A549 (cell line): ENCODE measurements at regions of chr17 and their contacts with region 1.

Region 1: GRCh38 chr17:2386400-2387085 is 14.3 kb downstream of the MNT start:
- DNase-seq: peak in 1 of 2 experiments; percentile 42
- ATAC-seq: no peak
- H3K4me3 ChIP-seq: no peak overlapping the region
- H3K27ac ChIP-seq: no peak overlapping the region
- H3K4me1 ChIP-seq: peaks cover 11% of the 10 kb centered on the region
- CTCF ChIP-seq: no peak
- EP300 ChIP-seq: no peak
- POLR2A ChIP-seq: no peak
- RAD21 ChIP-seq: no peak

Region 2: GRCh38 chr17:2354311-2354710 is 32.2 kb before region 1 on chr17:
- CTCF ChIA-PET with region 1: interaction called, 255 read pairs
- POLR2A ChIA-PET with region 1: no interaction called
- DNase-seq: no peak
- ATAC-seq: no peak
- H3K4me3 ChIP-seq: no peak overlapping the region
- H3K27ac ChIP-seq: no peak overlapping the region
- H3K4me1 ChIP-seq: peaks cover 15% of the 10 kb centered on the region
- CTCF ChIP-seq: no peak
- EP300 ChIP-seq: no peak
- POLR2A ChIP-seq: no peak
- RAD21 ChIP-seq: no peak

Region 3: DNA sequence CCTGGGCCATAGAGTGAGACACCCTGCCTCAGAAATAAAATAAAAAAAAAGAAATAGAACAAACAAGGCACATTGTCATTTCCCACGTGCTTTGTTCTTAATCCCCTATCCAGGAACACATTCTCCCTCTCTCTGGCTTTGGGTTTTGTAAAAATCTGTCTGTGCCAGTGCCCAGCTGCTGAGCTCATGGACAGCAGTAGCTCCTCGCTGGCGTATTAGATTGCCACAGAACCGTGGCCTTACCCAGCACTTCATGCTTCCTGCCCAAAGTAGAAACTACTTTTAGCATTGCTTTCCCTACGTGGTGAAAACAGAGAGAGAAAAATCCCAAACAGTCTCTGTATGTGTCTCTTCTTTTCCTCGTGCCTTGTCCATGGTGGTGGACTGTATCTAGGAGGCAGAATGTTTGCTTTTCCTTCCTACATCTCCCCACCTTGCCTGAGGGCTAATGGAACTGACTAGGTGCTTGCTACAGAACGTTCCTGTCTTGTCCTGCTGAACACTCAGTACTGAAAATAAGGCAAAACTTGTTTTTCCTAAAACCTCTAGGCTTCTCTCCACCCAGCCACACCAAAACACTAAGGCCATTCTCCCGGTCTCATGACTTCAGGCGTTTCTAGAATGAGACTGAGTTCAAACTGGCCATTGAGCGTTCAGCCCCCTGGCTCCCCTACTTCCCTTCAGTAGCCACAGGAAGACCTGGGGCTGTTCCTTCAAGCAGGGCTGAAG is 11.8 kb before region 1 on chr17:
- CTCF ChIA-PET with region 1: interaction called, 255 read pairs
- POLR2A ChIA-PET with region 1: no interaction called
- DNase-seq: no peak
- ATAC-seq: no peak
- H3K4me3 ChIP-seq: no peak overlapping the region
- H3K27ac ChIP-seq: no peak overlapping the region
- H3K4me1 ChIP-seq: no peaks in the 10 kb centered on the region
- CTCF ChIP-seq: no peak
- EP300 ChIP-seq: no peak
- POLR2A ChIP-seq: no peak
- RAD21 ChIP-seq: no peak

Region 4: GRCh38 chr17:2427215-2427614 is 40.7 kb after region 1 on chr17:
- CTCF ChIA-PET with region 1: interaction called, 1,099 read pairs
- POLR2A ChIA-PET with region 1: interaction called, 3 read pairs
- DNase-seq: no peak
- ATAC-seq: no peak
- H3K4me3 ChIP-seq: no peak overlapping the region
- H3K27ac ChIP-seq: no peak overlapping the region
- H3K4me1 ChIP-seq: no peaks in the 10 kb centered on the region
- CTCF ChIP-seq: no peak
- EP300 ChIP-seq: no peak
- POLR2A ChIP-seq: no peak
- RAD21 ChIP-seq: no peak